Prostate gland (tissue), 2 donors: ENCODE measurements at regions of chr20 and their contacts with region 1.

Region 1: DNA sequence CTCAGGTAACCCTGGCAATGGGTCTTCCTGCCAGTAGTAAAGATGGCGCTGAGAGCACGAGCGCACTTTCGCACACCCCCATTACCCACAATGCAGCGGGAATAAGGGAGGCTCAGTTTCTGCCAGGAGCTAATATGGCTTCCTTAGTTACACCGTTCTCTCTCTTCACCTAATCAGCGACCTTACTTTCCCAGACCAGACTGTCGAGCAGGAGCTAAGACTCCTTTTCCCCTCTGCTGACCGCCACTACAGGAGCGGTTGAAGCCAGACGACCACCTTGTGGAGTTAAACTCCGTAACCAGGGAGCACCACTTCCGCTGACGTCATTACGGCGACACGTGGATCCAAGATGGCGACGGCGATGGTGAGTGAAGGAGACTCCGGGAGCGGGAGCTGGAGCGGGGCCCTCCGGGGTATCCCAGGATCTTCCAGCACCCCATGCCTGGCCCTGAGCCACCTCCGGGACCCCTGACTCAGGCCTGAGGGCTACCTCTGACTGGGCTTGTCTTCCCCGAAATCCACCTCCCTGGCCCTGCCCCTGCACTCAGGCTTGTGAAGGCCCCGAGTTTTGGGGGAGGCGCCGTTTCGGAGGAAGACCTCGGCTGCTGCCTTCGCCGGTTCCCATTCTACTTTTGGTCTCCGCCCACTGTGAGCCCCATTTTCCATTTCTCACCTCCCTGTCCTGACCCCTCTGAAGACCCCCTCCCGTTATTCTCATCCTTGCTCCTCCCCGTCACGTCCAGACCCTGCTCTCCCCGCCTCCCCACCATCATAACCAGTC is at the start of gene TM9SF4:
- DNase-seq: peak; percentile 85
- H3K4me3 ChIP-seq: peak within 1 kb of the TSS; percentile 83 to 91
- H3K27ac ChIP-seq: peak within 1 kb of the TSS; percentile 98
- H3K4me1 ChIP-seq: peaks cover 3% of the 10 kb centered on the region
- H3K27me3 ChIP-seq: no peaks in the 10 kb centered on the region
- CTCF ChIP-seq: peak in 1 of 4 experiments; percentile 18
- POLR2A ChIP-seq: peak; percentile 51
- total RNA-seq, gene TM9SF4: 44.7 to 62.9 TPM

Region 2: DNA sequence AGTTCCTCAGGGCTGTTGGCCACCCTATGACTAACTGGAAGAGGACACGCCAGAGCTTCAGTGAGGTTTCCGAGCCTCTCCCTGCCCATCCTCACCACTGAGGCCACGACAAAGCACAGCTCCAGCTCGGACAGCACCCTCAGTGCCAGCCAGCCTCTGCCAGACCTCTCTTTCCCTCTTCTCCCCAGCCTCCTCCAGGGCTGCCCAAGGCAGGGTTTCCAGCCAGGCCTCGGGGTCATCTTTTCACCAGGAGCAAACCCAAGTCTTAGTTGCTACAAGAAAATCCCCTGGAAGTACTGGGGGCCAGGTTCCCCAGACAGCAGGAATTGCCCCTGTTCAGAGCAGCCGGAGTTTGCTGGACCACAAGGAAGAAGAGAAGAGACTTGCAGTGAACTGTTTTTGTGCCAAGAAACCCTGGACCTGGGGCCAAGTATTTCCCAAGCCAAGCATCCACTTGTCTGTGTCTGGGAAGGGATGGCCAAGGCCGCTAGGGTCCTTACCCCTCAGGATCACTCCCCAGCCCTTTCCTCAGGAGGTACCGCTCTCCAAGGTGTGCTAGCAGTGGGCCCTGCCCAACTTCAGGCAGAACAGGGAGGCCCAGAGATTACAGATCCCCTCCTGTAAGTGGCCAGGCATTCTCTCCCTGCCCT is 56.4 kb after region 1 on chr20:
- intact Hi-C with region 1: no loop called
- DNase-seq: no peak
- H3K4me3 ChIP-seq: no peak overlapping the region
- H3K27ac ChIP-seq: no peak overlapping the region
- H3K4me1 ChIP-seq: no peaks in the 10 kb centered on the region
- H3K27me3 ChIP-seq: no peaks in the 10 kb centered on the region
- CTCF ChIP-seq: no peak
- POLR2A ChIP-seq: no peak

Region 3: GRCh38 chr20:32207626-32208498 is 98.3 kb after region 1 on chr20 and contains the starts of genes PLAGL2 and POFUT1:
- intact Hi-C with region 1: loop called (anchors 10 kb)
- DNase-seq: peak; percentile 88
- H3K4me3 ChIP-seq: peak within 1 kb of the TSS; percentile 96 to 99
- H3K27ac ChIP-seq: peak within 1 kb of the TSS; percentile 94 to 97
- H3K4me1 ChIP-seq: peaks cover 30% of the 10 kb centered on the region
- H3K27me3 ChIP-seq: no peaks in the 10 kb centered on the region
- CTCF ChIP-seq: peak in 3 of 4 experiments; percentile 29 to 44 (median 36)
- POLR2A ChIP-seq: peak; percentile 88
- total RNA-seq, gene PLAGL2: 11.2 to 17.4 TPM
- total RNA-seq, gene POFUT1: 33.2 to 44.3 TPM